Activated CD4-positive, alpha-beta memory T cell treated with anti-CD3 and anti-CD28 coated beads for 36 hours (primary cell): ENCODE measurements at regions of chr7 and their contacts with region 1.

Region 1: GRCh38 chr7:21305455-21306235 is 122.2 kb upstream of the SP4 start:
- DNase-seq: no peak
- H3K4me3 Mint-ChIP-seq: no peak overlapping the region
- H3K27ac Mint-ChIP-seq: no peak overlapping the region
- H3K4me1 Mint-ChIP-seq: peaks cover 22% of the 10 kb centered on the region
- H3K27me3 Mint-ChIP-seq: no peaks in the 10 kb centered on the region

Region 2: GRCh38 chr7:21338728-21339164 is 33.1 kb after region 1 on chr7:
- CTCF ChIA-PET with region 1: no interaction called
- POLR2A ChIA-PET with region 1: interaction called, 6 read pairs
- intact Hi-C with region 1: loop called (anchors 1 kb)
- DNase-seq: peak; percentile 79
- H3K4me3 Mint-ChIP-seq: peak overlapping the region; percentile 31
- H3K27ac Mint-ChIP-seq: peak overlapping the region; percentile 96
- H3K4me1 Mint-ChIP-seq: peaks cover 37% of the 10 kb centered on the region
- H3K27me3 Mint-ChIP-seq: no peaks in the 10 kb centered on the region

Region 3: GRCh38 chr7:21352540-21353387 is 47.1 kb after region 1 on chr7:
- CTCF ChIA-PET with region 1: no interaction called
- POLR2A ChIA-PET with region 1: no interaction called
- intact Hi-C with region 1: loop called (anchors 1 kb)
- DNase-seq: no peak
- H3K4me3 Mint-ChIP-seq: peak overlapping the region; percentile 39
- H3K27ac Mint-ChIP-seq: peak overlapping the region; percentile 77
- H3K4me1 Mint-ChIP-seq: peaks cover 55% of the 10 kb centered on the region
- H3K27me3 Mint-ChIP-seq: no peaks in the 10 kb centered on the region

Region 4: GRCh38 chr7:21365866-21366624 is 60.4 kb after region 1 on chr7:
- CTCF ChIA-PET with region 1: no interaction called
- POLR2A ChIA-PET with region 1: no interaction called
- intact Hi-C with region 1: loop called (anchors 1 kb)
- DNase-seq: no peak
- H3K4me3 Mint-ChIP-seq: no peak overlapping the region
- H3K27ac Mint-ChIP-seq: no peak overlapping the region
- H3K4me1 Mint-ChIP-seq: peaks cover 49% of the 10 kb centered on the region
- H3K27me3 Mint-ChIP-seq: peaks cover 3% of the 10 kb centered on the region